GM12878 (cell line): ENCODE measurements at regions of chr20 and their contacts with region 1.

Region 1: GRCh38 chr20:1437235-1437904 is 29.3 kb downstream of the NSFL1C start:
- DNase-seq: peak; percentile 40
- ATAC-seq: peak; percentile 77
- H3K4me3 ChIP-seq: no peak overlapping the region
- H3K27ac ChIP-seq: no peak overlapping the region
- H3K4me1 ChIP-seq: peaks cover 11% of the 10 kb centered on the region
- H3K27me3 ChIP-seq: no peaks in the 10 kb centered on the region
- CTCF ChIP-seq: peak; percentile 82 to 84 (median 83)
- EP300 ChIP-seq: no peak
- POLR2A ChIP-seq: no peak
- RAD21 ChIP-seq: peak; percentile 91

Region 2: DNA sequence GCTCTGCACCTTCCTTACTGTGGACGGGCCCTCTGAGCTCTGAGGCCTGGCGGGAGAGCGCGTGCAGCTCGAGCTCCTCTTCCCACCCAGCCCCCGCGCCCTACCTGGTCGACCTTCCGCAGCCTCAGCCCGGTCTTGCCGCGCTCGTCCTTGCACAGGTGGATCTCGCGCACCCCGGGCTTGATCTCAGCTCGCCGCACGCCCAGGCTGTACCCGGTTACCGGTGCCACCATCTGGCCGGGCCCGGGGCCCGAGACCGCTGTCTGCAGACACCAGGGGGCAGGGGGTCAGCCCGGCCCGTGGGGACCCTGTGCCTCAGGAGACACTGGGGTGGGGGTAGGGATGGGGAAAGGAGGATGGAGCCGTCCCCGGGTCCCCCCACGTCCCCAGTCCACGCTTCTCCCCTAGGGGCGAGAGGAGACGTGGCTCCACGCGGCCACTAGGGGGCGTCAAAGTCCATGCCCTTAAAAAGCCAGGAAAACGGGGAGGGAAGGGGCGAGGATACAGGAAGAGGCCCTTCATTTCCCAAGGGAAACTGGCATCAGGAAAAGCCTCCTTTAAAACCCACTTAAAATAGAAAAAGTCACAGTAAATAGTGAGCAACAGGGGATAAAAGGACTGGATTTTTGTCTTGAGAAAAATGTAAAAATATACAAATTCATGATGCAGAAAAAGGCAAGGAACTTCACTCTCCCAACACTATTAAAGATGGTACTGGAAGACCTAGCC is 124.0 kb before region 1 on chr20:
- CTCF ChIA-PET with region 1: interaction called, 61 read pairs
- POLR2A ChIA-PET with region 1: no interaction called
- RAD21 ChIA-PET with region 1: interaction called, 14 read pairs
- SMC1A ChIA-PET with region 1: interaction called, 32 read pairs
- in situ Hi-C with region 1: loop called (anchors 5 kb)
- intact Hi-C with region 1: loop called (anchors 1 kb)
- DNase-seq: no peak
- ATAC-seq: peak; percentile 90
- H3K4me3 ChIP-seq: no peak overlapping the region
- H3K27ac ChIP-seq: no peak overlapping the region
- H3K4me1 ChIP-seq: peaks cover 6% of the 10 kb centered on the region; the same call in 1 of the 2 replicates
- H3K27me3 ChIP-seq: no peaks in the 10 kb centered on the region
- CTCF ChIP-seq: peak; percentile 87 to 92 (median 89)
- EP300 ChIP-seq: no peak
- POLR2A ChIP-seq: no peak
- RAD21 ChIP-seq: peak; percentile 95

Region 3: DNA sequence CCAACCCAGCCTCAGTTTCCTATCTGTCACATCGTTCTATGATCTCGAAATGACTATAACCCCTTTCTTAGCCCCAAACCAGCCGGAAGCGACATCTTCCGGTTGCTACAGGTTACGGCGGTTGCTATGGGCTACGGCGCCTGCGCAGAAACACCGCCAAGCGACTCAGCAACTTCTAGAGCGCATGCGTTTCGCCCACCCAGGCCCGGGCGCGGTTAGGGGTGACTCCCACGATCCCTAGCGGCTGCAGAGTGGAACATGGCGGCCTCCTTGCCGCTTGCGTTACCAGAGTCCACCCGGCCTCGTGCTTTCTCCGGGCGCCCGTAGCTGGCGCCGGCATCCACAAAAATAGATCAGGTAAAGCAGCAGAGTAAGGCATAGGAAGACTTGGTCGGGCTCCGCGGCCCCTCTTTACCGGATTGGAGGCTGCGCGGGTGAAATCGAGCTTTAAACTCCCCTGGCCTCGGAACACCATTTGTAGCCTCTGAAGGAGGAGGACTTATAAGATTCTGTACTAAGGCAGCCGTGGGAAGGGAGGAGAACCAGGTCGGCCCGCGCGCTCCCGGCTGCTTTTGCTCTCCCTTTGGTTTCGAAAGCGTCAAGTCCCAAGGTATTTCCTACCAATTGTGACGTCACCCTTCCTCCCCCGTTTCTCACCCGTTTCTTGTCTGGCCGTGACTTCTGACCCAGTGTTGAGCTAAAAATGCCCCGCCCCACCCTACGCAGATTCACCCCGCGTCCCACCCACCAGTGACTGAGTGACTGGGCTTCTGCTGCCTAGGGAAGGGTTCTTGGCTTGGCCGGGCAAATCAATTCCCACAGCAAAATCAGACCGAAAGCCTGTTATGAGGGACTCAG is 112.0 kb before region 1 on chr20:
- CTCF ChIA-PET with region 1: interaction called, 55 read pairs
- POLR2A ChIA-PET with region 1: no interaction called
- RAD21 ChIA-PET with region 1: interaction called, 5 read pairs
- SMC1A ChIA-PET with region 1: interaction called, 16 read pairs
- in situ Hi-C with region 1: no loop called
- intact Hi-C with region 1: no loop called
- DNase-seq: peak; percentile 88
- ATAC-seq: peak; percentile 89
- H3K4me3 ChIP-seq: peak overlapping the region; percentile 90
- H3K27ac ChIP-seq: peak overlapping the region; percentile 94
- H3K4me1 ChIP-seq: peaks cover 34% of the 10 kb centered on the region
- H3K27me3 ChIP-seq: no peaks in the 10 kb centered on the region
- CTCF ChIP-seq: no peak
- EP300 ChIP-seq: peak in 1 of 2 experiments; percentile 74; a peak in 1 of 4 replicates
- POLR2A ChIP-seq: peak; percentile 97
- RAD21 ChIP-seq: no peak

Region 4: DNA sequence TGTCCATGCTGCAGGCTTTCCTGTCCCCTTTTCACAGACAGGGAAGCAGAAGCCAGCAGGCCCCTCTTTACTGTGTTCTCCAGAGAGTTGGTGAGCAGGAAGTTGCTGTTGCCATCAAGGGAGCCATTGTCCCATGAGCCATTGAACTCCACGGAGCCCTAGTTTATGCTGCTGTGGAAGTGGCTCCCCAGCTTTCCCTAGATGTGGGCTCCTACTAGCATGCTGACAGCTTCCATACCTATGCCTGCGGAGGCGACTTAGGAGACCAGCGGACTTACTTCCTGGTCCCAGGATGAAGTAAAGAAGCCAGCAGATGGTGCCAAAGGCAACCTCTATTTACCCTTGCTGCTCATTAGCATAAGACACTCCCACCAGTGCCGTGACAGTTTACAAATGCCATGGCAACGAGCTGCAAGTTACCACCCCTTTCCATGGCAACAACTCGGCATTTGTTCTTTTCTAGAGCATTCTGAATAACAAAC is 13.7 kb before region 1 on chr20:
- CTCF ChIA-PET with region 1: interaction called, 25 read pairs
- POLR2A ChIA-PET with region 1: no interaction called
- RAD21 ChIA-PET with region 1: interaction called, 15 read pairs
- SMC1A ChIA-PET with region 1: interaction called, 13 read pairs
- in situ Hi-C with region 1: no loop called
- intact Hi-C with region 1: no loop called
- DNase-seq: no peak
- ATAC-seq: peak; percentile 89
- H3K4me3 ChIP-seq: no peak overlapping the region
- H3K27ac ChIP-seq: no peak overlapping the region
- H3K4me1 ChIP-seq: no peaks in the 10 kb centered on the region
- H3K27me3 ChIP-seq: peaks cover 0 to 2% of the 10 kb centered on the region in 2 experiments; a peak in 2 of 4 replicates
- CTCF ChIP-seq: peak in 2 of 3 experiments; percentile 12 to 36; a peak in 3 of 6 replicates
- EP300 ChIP-seq: no peak
- POLR2A ChIP-seq: no peak
- RAD21 ChIP-seq: peak; percentile 14; the same call in 1 of the 2 replicates

Region 5: GRCh38 chr20:1450926-1451491 is 13.6 kb after region 1 on chr20:
- CTCF ChIA-PET with region 1: interaction called, 22 read pairs
- POLR2A ChIA-PET with region 1: no interaction called
- RAD21 ChIA-PET with region 1: interaction called, 3 read pairs
- SMC1A ChIA-PET with region 1: interaction called, 3 read pairs
- in situ Hi-C with region 1: no loop called
- intact Hi-C with region 1: no loop called
- DNase-seq: no peak
- ATAC-seq: no peak
- H3K4me3 ChIP-seq: no peak overlapping the region
- H3K27ac ChIP-seq: no peak overlapping the region
- H3K4me1 ChIP-seq: no peaks in the 10 kb centered on the region
- H3K27me3 ChIP-seq: no peaks in the 10 kb centered on the region
- CTCF ChIP-seq: no peak
- EP300 ChIP-seq: no peak
- POLR2A ChIP-seq: no peak
- RAD21 ChIP-seq: no peak

Region 6: GRCh38 chr20:1466211-1467081 is 29.1 kb after region 1 on chr20 and contains the start of gene NSFL1C:
- CTCF ChIA-PET with region 1: interaction called, 54 read pairs
- POLR2A ChIA-PET with region 1: no interaction called
- RAD21 ChIA-PET with region 1: interaction called, 8 read pairs
- SMC1A ChIA-PET with region 1: interaction called, 6 read pairs
- in situ Hi-C with region 1: no loop called
- intact Hi-C with region 1: no loop called
- DNase-seq: peak; percentile 59
- ATAC-seq: peak; percentile 91
- H3K4me3 ChIP-seq: peak within 1 kb of the TSS; percentile 93
- H3K27ac ChIP-seq: peak within 1 kb of the TSS; percentile 27
- H3K4me1 ChIP-seq: peaks cover 25% of the 10 kb centered on the region
- H3K27me3 ChIP-seq: no peaks in the 10 kb centered on the region; a peak in 1 of 4 replicates
- CTCF ChIP-seq: peak; percentile 84 to 98 (median 91)
- EP300 ChIP-seq: no peak
- POLR2A ChIP-seq: peak; percentile 94
- RAD21 ChIP-seq: peak; percentile 36; the same call in 1 of the 2 replicates
- polyA plus RNA-seq, gene NSFL1C: 27.7 to 29.4 TPM

Region 7: DNA sequence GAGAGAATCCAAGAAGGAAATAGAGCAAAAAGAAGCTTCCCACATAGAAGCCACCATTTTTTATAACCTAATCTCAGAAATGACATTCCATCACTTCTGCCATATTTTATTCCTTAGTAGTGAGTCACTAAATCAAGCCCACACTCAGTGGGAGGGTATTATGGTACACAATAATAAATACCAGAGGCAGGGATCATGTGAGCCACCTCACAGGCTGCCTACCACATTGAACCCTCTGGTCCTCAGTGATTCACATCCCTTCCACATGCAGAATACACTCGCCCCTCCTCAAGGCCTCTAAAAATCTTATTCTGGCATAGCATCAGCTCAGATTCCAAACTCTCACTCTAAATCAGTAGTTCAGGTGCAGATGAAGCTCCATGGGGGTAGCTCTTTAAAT is 1148.4 kb after region 1 on chr20:
- CTCF ChIA-PET with region 1: no interaction called
- POLR2A ChIA-PET with region 1: no interaction called
- RAD21 ChIA-PET with region 1: no interaction called
- SMC1A ChIA-PET with region 1: no interaction called
- in situ Hi-C with region 1: no loop called
- intact Hi-C with region 1: no loop called
- DNase-seq: no peak
- ATAC-seq: no peak
- H3K4me3 ChIP-seq: no peak overlapping the region
- H3K27ac ChIP-seq: no peak overlapping the region
- H3K4me1 ChIP-seq: no peaks in the 10 kb centered on the region
- H3K27me3 ChIP-seq: peaks cover 0 to 2% of the 10 kb centered on the region in 2 experiments; a peak in 2 of 4 replicates
- CTCF ChIP-seq: no peak
- EP300 ChIP-seq: no peak
- POLR2A ChIP-seq: no peak
- RAD21 ChIP-seq: no peak